WTC11 (cell line): ENCODE measurements at regions of chr11 and their contacts with region 1.

Region 1: DNA sequence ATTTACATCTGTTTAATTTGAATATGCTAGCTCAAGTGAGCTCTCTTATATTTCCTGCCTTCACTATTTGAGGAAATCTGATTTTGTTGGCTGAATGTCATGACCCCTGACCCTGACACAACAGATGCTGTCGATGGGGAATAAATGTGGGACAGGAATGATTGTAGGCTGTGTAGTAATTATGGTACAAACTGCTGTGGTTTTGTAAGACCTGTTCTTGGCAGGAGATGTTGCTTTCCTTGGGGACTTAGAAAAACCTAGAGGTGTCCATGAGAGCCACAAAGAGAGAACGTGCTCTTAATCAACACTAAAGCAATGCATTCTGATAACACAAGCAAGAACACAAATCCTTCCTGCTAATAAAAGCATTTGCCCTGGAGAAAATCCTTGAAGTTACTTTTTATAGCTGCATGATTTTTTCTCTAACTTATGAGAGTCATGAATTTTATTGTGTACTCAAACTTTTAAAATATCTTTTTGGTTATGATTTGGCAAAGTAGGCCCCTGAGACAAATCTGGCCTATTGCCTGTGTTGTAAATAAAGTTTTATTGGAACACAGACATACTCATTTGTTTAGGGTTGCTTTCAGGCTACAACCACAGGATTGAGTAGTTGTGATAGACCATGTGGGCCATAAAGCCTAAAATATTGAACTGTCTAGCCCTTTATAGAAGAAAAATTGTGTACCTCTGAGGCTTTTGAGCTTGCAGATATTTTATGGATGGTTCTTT is 90.2 kb downstream of the DDX10 start:
- DNase-seq: no peak
- ATAC-seq: no peak
- H3K4me3 Mint-ChIP-seq: no peak overlapping the region
- H3K27ac Mint-ChIP-seq: peak overlapping the region; percentile 31; the same call in 1 of the 2 replicates
- H3K4me1 Mint-ChIP-seq: peaks cover 33% of the 10 kb centered on the region
- H3K27me3 Mint-ChIP-seq: no peaks in the 10 kb centered on the region
- CTCF ChIP-seq: no peak

Region 2: DNA sequence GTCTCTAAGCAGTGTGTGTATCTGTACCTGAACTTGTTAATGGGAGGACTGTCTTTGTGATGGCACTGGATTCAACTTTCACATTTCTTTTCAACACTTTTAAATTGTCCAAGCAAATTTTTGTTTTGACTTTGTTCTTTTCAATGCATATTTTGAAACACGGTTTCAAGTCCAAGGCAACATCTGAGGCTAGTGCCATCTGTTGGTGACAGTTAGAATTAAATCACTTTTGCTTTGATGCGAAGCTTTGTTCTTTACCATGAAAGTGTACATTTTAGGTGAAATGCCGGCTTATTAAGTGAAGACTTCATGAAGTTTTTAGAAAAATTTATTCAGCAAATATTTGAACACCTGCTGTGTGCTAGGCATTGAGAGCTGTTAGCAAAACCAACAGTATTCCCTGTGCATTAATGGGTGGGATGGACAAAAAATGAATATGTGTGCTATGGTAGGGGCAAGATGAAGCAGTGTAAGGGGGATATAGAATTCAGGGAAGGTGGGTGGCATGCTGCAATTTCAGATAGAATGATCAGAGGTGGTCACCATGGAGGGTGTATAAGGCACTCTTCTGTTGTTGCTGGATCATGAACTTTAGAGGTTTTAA is 20.0 kb before region 1 on chr11:
- CTCF ChIA-PET with region 1: interaction called, 10 read pairs
- POLR2A ChIA-PET with region 1: no interaction called
- DNase-seq: no peak
- ATAC-seq: no peak
- H3K4me3 Mint-ChIP-seq: no peak overlapping the region
- H3K27ac Mint-ChIP-seq: no peak overlapping the region
- H3K4me1 Mint-ChIP-seq: peaks cover 29% of the 10 kb centered on the region
- H3K27me3 Mint-ChIP-seq: no peaks in the 10 kb centered on the region
- CTCF ChIP-seq: no peak; the same call in 1 of the 2 replicates